WTC11 (cell line): ENCODE measurements at regions of chr2 and their contacts with region 1.

Region 1: DNA sequence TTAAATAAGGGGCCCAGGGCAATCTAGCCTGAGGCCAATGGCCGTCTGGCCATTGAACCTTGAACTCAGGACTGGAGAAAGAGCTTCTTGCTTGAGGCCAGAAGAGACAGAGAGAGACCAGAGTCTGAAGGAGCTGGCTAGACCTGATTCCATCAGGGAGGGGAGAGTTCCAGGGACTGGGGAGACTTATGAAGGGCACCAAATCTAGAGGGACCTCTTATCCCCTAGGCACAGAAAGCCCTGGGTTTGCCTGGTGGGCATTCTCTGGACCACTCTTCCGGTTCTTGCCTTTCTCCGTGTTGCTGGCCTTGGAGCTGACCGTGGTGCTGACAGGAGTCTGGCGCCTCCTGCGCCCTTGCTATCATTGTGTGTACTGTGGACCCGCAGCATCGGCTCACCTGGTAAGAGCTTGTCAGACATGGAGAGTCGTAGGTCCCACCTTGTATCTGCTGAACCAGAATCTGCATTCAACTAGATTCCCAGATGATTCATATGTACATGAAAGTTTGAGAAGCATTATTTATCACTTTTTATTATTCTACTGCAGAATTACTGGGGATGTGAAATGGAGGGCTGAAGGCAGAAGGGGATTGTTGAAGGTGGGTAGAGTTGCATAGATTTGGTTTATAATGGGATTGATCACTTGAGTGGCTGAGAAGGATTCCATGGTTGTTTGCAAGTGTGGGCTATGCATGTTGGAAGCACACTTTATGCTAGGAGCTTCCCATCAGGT is 4.3 kb upstream of the TRPM8 start:
- DNase-seq: peak; percentile 82
- ATAC-seq: peak; percentile 94
- H3K4me3 Mint-ChIP-seq: no peak overlapping the region
- H3K27ac Mint-ChIP-seq: no peak overlapping the region
- H3K4me1 Mint-ChIP-seq: peaks cover 11% of the 10 kb centered on the region
- H3K27me3 Mint-ChIP-seq: peaks cover 15% of the 10 kb centered on the region
- CTCF ChIP-seq: no peak

Region 2: DNA sequence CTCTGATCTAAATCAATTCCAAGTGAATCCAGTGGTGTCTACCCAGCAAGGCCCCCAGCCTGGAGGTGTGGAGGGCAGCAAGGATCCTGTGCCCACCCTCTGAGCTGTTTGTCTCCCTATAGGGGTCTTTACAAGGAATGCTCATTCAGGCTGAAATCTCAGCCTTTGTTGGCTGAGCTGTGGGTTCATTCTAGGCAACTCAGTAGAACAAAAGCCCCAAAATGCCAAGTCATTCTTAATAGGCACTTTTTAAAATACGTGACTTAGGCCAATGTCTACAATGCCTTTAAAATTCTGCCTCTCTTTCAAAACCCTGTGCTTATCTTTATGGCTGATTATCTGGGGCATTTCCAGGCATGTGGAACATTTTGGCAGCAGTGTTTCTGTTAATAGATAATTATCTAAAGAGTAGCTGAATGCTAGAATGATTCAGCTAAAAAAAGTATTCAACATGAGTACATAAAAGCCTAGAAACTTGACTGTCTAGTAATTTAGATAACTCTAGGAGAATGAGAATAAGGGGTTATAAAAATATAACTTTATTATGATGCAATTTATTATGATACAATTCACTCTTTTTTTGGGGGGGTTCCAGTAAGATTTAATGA is 212.7 kb before region 1 on chr2:
- CTCF ChIA-PET with region 1: no interaction called
- POLR2A ChIA-PET with region 1: no interaction called
- DNase-seq: no peak
- ATAC-seq: peak; percentile 67
- H3K4me3 Mint-ChIP-seq: no peak overlapping the region
- H3K27ac Mint-ChIP-seq: 0 out of 2 replicates have a peak overlapping the region, but pooled peaks have one; percentile 38
- H3K4me1 Mint-ChIP-seq: peaks cover 7% of the 10 kb centered on the region; the same call in 1 of the 2 replicates
- H3K27me3 Mint-ChIP-seq: no peaks in the 10 kb centered on the region
- CTCF ChIP-seq: no peak

Region 3: DNA sequence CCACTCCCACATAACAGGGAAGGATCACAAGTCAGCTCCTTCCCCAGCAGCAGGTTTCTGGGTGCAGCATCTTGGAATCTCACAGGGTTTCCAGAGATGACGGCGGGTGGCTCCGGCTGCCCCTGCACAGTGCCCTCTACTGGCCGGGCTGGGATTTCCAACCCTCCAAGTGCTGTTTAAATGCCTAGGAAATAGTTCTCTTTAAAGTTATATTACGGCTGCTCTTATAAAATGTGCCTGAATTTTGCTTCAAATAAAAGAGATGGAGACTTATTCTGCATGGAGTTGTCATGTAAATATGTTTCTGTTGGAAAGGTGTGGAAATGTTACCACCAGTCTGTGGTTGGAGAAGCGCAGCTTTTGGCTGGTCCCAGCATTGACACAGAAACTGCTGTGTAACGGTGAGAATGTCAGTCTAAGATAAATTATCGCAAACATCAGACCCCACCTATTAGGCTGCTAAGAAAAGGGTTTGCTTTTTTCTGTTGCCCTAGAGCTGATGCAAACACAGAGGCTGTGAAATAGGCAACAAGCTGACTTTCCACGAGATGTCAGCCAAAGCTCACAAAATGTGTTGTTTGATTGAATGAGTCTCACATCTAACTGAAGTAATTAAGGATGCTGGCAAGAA is 55.2 kb before region 1 on chr2:
- CTCF ChIA-PET with region 1: interaction called, 10 read pairs
- POLR2A ChIA-PET with region 1: no interaction called
- DNase-seq: peak; percentile 74
- ATAC-seq: peak; percentile 14; the same call in 1 of the 2 replicates
- H3K4me3 Mint-ChIP-seq: no peak overlapping the region
- H3K27ac Mint-ChIP-seq: no peak overlapping the region
- H3K4me1 Mint-ChIP-seq: peaks cover 36% of the 10 kb centered on the region
- H3K27me3 Mint-ChIP-seq: no peaks in the 10 kb centered on the region
- CTCF ChIP-seq: peak; percentile 77

Region 4: DNA sequence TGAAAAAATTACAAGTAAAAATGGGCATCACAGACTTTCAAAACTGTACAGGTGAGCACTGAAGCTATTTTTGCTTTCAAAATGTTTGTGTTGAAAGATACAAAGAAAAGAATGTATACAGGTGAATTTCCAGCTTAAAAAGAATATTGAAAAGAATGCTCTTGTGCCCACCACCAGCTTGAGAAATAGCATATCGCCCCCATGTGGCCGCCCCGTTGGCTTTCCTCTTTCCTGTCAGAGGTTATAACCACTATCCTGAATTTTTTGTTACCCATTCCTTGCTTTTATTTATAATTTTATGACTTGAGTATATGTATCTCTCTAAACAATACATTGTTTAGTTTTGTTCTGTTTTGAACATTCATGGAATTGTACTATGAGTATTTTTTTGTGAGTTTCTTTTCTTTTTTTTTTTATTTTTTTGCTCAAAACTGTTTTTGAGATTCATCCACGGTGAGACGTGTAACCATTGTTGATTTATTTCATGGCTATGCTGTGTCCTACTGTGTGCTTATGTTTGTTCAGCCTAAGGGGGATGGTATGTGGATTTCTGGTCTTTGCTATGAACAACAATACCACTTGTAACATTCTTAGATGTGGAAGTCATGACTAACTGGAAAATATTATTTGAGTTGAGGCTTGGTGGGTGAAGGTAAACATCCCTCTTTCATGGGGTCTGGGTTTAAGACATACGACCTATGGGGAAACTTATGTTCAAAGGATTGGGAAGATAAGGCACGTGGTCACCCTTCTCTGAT is 15.9 kb after region 1 on chr2:
- CTCF ChIA-PET with region 1: interaction called, 13 read pairs
- POLR2A ChIA-PET with region 1: no interaction called
- DNase-seq: peak; percentile 67
- ATAC-seq: 0 out of 2 replicates have a peak, but pooled peaks have one; percentile 19
- H3K4me3 Mint-ChIP-seq: no peak overlapping the region
- H3K27ac Mint-ChIP-seq: peak overlapping the region; percentile 34; the same call in 1 of the 2 replicates
- H3K4me1 Mint-ChIP-seq: peaks cover 26% of the 10 kb centered on the region
- H3K27me3 Mint-ChIP-seq: no peaks in the 10 kb centered on the region
- CTCF ChIP-seq: peak; percentile 50; the same call in 1 of the 2 replicates